Transverse colon (tissue), 4 donors: ENCODE measurements at regions of chr15 and their contacts with region 1.

Region 1: GRCh38 chr15:73691396-73691795 is 7.2 kb downstream of the CD276 start:
- DNase-seq: peak; percentile 52
- H3K4me3 ChIP-seq: no peak overlapping the region
- H3K27ac ChIP-seq: no peak overlapping the region
- H3K4me1 ChIP-seq: peaks cover 9 to 57% (median 27%) of the 10 kb centered on the region in 4 donors
- H3K27me3 ChIP-seq: no peaks in the 10 kb centered on the region
- CTCF ChIP-seq: no peak
- EP300 ChIP-seq: no peak
- POLR2A ChIP-seq: no peak

Region 2: DNA sequence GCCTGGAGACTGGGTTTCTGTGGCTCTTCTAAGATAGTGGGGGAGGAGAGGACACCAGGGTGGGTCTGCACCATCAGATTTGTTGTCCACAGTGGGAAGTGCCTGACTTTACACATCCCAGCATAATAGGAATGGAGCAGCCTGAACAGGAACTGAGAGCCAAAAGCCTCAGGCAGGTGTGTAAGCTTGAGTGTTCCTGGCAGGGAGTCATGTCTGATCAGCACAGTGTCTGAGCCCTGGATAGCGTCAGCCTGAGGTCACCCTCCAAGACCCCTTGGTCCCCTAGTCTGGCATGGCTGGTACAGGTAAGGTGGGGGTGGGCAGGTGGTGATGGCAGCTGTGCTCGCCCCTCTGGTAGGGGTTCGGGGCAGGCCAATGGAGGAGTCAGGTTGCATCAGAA is 41.5 kb after region 1 on chr15:
- in situ Hi-C with region 1: no loop called
- intact Hi-C with region 1: no loop called
- DNase-seq: no peak
- H3K4me3 ChIP-seq: no peak overlapping the region
- H3K27ac ChIP-seq: no peak overlapping the region
- H3K4me1 ChIP-seq: no peaks in the 10 kb centered on the region
- H3K27me3 ChIP-seq: no peaks in the 10 kb centered on the region
- CTCF ChIP-seq: no peak
- EP300 ChIP-seq: no peak
- POLR2A ChIP-seq: no peak

Region 3: DNA sequence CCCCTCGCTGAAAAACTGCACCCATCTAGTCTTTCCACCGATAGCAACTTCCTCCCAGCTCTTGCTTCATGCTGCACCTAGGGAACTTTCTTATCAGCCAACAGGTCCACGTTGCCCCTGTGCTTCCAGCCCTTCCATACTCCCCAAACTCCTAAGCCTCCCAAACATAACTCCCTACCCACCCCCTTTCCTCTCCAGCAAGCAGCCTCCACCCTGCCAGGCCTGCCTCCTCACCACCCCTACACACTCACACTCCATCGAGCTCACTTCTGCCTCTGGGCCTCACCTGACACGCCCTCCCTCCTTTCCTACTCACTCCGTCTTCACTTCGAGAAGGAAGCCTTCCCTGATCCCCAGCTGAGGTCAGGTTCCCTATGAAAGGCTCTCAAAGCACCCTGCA is 53.7 kb after region 1 on chr15:
- in situ Hi-C with region 1: no loop called
- intact Hi-C with region 1: loop called (anchors 2 kb)
- DNase-seq: no peak
- H3K4me3 ChIP-seq: no peak overlapping the region
- H3K27ac ChIP-seq: no peak overlapping the region
- H3K4me1 ChIP-seq: peaks cover 0 to 8% (median 0%) of the 10 kb centered on the region in 4 donors
- H3K27me3 ChIP-seq: no peaks in the 10 kb centered on the region
- CTCF ChIP-seq: no peak
- EP300 ChIP-seq: no peak
- POLR2A ChIP-seq: no peak

Region 4: DNA sequence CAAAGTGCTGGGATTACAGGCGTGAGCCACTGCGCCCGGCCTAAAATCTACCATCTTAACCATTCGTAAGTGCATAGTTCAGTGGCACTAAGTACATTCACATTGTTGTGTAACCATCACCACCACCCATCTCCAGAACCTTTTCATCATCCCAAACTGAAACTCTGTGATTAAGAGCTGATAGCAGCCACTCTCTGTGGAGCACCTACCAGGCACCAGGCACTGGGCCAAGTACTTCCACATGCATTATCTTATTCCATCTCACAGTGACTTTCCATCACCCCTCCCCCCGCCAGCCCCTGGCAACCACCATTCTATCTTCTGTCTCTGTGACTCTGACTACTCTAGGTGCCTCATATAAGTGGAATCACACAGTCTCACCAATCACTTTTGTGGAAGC is 64.1 kb after region 1 on chr15:
- in situ Hi-C with region 1: no loop called
- intact Hi-C with region 1: no loop called
- DNase-seq: no peak
- H3K4me3 ChIP-seq: no peak overlapping the region
- H3K27ac ChIP-seq: no peak overlapping the region
- H3K4me1 ChIP-seq: peaks cover 0 to 17% (median 11%) of the 10 kb centered on the region in 4 donors
- H3K27me3 ChIP-seq: peaks cover 65% of the 10 kb centered on the region
- CTCF ChIP-seq: no peak
- EP300 ChIP-seq: no peak
- POLR2A ChIP-seq: no peak